HEK293 (cell line): ENCODE measurements at regions of chr5 and their contacts with region 1.

Region 1: GRCh38 chr5:140244525-140245025 is 58.3 kb downstream of the PFDN1 start:
- H3K4me3 ChIP-seq: no peak overlapping the region
- H3K27ac ChIP-seq: no peak overlapping the region
- H3K4me1 ChIP-seq: peaks cover 20% of the 10 kb centered on the region
- CTCF ChIP-seq: peak; percentile 95

Region 2: GRCh38 chr5:139844472-139845145 is 400.0 kb before region 1 on chr5:
- CTCF ChIA-PET with region 1: no interaction called
- POLR2A ChIA-PET with region 1: no interaction called
- H3K4me3 ChIP-seq: no peak overlapping the region
- H3K27ac ChIP-seq: no peak overlapping the region
- H3K4me1 ChIP-seq: no peaks in the 10 kb centered on the region
- CTCF ChIP-seq: peak; percentile 88

Region 3: GRCh38 chr5:140227048-140227447 is 17.5 kb before region 1 on chr5:
- CTCF ChIA-PET with region 1: interaction called, 48 read pairs
- POLR2A ChIA-PET with region 1: no interaction called
- H3K4me3 ChIP-seq: no peak overlapping the region
- H3K27ac ChIP-seq: no peak overlapping the region
- H3K4me1 ChIP-seq: no peaks in the 10 kb centered on the region
- CTCF ChIP-seq: no peak; the same call in 1 of the 2 replicates

Region 4: GRCh38 chr5:140234377-140234989 is 10.1 kb before region 1 on chr5:
- CTCF ChIA-PET with region 1: interaction called, 48 read pairs
- POLR2A ChIA-PET with region 1: no interaction called
- H3K4me3 ChIP-seq: no peak overlapping the region
- H3K27ac ChIP-seq: no peak overlapping the region
- H3K4me1 ChIP-seq: no peaks in the 10 kb centered on the region
- CTCF ChIP-seq: no peak

Region 5: DNA sequence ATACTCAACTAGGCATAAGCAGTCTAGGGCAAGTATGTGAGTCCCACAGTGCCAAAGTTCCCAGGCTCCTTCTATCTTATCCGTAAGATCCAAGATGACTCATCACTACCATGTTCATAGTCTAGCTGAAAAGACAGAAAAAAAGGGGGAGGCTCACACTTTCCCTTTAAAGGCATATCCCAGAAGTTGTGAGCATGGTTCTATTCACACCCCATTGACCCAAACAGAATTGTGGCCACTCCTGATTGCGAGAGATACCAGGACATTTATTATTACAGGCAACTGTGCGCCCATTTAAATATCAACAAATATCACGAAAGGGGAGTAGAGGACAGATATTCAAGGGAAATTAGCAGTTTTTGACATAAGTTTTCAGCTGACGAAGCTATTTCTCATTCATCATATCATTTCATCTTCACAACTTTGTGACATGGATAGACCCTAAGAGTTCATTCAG is 66.5 kb after region 1 on chr5:
- CTCF ChIA-PET with region 1: interaction called, 20 read pairs
- POLR2A ChIA-PET with region 1: no interaction called
- H3K4me3 ChIP-seq: no peak overlapping the region
- H3K27ac ChIP-seq: no peak overlapping the region
- H3K4me1 ChIP-seq: no peaks in the 10 kb centered on the region
- CTCF ChIP-seq: no peak

Region 6: GRCh38 chr5:140357726-140358093 is 113.1 kb after region 1 on chr5:
- CTCF ChIA-PET with region 1: interaction called, 660 read pairs
- POLR2A ChIA-PET with region 1: interaction called, 7 read pairs
- H3K4me3 ChIP-seq: no peak overlapping the region
- H3K27ac ChIP-seq: no peak overlapping the region
- H3K4me1 ChIP-seq: no peaks in the 10 kb centered on the region
- CTCF ChIP-seq: peak; percentile 89

Region 7: GRCh38 chr5:140362860-140363630 is 118.5 kb after region 1 on chr5:
- CTCF ChIA-PET with region 1: interaction called, 70 read pairs
- POLR2A ChIA-PET with region 1: interaction called, 7 read pairs
- H3K4me3 ChIP-seq: peak overlapping the region; percentile 33
- H3K27ac ChIP-seq: no peak overlapping the region; the same call in 1 of the 2 replicates
- H3K4me1 ChIP-seq: no peaks in the 10 kb centered on the region
- CTCF ChIP-seq: peak; percentile 94

Region 8: DNA sequence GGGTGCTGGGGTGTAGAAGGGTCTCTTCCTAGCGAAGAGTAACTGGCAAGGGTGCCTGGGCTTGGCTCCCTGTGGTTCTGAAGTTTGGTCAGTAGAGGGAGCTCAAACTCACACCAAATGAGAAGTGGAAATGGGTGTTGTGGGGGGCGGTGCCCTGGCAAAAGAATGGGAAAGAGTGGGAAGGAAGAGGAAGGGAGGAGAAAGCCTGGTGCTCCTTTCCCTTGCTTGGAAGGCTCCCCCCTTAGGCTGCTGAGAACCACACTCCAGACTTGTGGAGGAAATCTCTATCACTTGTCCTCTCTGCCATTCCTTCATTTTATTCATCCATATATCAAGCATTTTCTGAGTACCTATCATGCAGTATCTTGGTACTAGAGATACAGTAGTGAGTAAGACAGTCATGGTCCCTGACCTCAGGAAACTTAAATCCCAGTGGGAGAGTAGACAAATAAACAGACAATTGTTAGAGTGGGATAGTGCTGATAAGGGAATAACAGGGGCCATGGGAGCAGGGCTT is 128.5 kb after region 1 on chr5:
- CTCF ChIA-PET with region 1: interaction called, 15 read pairs
- POLR2A ChIA-PET with region 1: no interaction called
- H3K4me3 ChIP-seq: no peak overlapping the region
- H3K27ac ChIP-seq: no peak overlapping the region
- H3K4me1 ChIP-seq: no peaks in the 10 kb centered on the region
- CTCF ChIP-seq: peak; percentile 80